ENCODE measurements at regions of chr7 and their contacts with region 1.

Region 1: GRCh38 chr7:31134246-31135188 is 82.4 kb downstream of the ADCYAP1R1 start:
- DNase-seq: peak; percentile 26 to 62
- H3K4me3 ChIP-seq: no peak overlapping the region
- H3K27ac ChIP-seq: no peak overlapping the region
- H3K4me1 ChIP-seq: no peaks in the 10 kb centered on the region
- H3K27me3 ChIP-seq: no peaks in the 10 kb centered on the region
- CTCF ChIP-seq: peak; percentile 30 to 64 (median 63)
- POLR2A ChIP-seq: no peak

Region 2: GRCh38 chr7:30433082-30433481 is 701.4 kb before region 1 on chr7:
- intact Hi-C with region 1: no loop called
- DNase-seq: peak; percentile 56 to 62
- H3K4me3 ChIP-seq: no peak overlapping the region
- H3K27ac ChIP-seq: peak overlapping the region; percentile 70 to 84
- H3K4me1 ChIP-seq: peaks cover 4 to 21% of the 10 kb centered on the region in 2 donors
- H3K27me3 ChIP-seq: no peaks in the 10 kb centered on the region
- CTCF ChIP-seq: no peak
- POLR2A ChIP-seq: no peak

Region 3: DNA sequence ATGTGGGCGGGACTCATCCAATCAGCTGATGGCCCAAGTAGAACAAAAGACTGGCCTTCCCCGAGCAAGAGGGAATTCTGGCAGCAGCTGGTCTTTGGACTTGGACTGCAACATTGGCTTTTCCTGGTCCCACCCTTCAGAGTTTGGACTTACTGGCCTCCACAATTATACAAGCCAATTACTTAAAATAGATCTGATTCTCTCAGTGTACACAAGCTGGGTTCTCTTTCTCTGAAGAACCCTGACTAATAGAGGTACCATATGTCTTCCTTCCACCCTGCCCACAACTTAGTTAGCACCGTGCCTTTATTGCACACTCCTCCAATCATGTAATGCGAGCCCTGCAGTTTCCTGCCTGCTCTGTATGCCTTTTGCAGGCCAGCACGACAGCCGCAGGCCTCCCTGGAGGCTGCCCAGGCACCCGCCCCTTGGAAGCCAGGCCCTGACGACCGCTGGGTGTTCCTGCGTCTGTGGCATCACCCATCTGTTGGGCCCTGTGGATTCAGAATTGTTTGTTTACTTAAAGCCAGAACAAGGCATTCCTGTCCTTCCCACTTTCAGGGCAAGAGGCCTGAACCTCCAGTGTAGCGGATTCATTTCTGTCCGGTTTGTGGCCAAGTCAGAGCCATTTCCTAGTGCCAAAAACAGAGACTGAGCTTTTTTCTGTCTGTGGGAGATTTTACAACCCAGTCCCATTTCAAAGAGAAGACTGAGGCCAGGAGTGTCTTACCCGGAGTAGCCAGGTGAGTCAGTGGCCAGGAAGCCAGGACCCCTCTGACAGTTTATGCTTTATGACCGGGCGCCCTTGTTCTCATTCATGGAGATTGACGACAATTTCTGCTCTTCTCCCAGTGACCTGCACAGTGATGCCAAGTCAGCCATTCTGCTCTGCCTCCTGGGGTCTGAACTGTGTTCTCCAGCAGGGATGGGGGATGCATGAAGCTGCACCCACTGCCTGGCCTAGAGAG is 383.6 kb before region 1 on chr7:
- intact Hi-C with region 1: no loop called
- DNase-seq: no peak
- H3K4me3 ChIP-seq: no peak overlapping the region
- H3K27ac ChIP-seq: peak overlapping the region; percentile 29 to 78
- H3K4me1 ChIP-seq: no peaks in the 10 kb centered on the region
- H3K27me3 ChIP-seq: no peaks in the 10 kb centered on the region
- CTCF ChIP-seq: no peak
- POLR2A ChIP-seq: no peak

Region 4: GRCh38 chr7:31651869-31652268 is 517.4 kb after region 1 on chr7:
- intact Hi-C with region 1: loop called (anchors 10 kb)
- DNase-seq: no peak
- H3K4me3 ChIP-seq: no peak overlapping the region
- H3K27ac ChIP-seq: no peak overlapping the region
- H3K4me1 ChIP-seq: no peaks in the 10 kb centered on the region
- H3K27me3 ChIP-seq: no peaks in the 10 kb centered on the region
- CTCF ChIP-seq: no peak
- POLR2A ChIP-seq: no peak

Measured in breast epithelium (tissue), 4 donors.